Heart left ventricle (tissue), 16 donors: ENCODE measurements at regions of chr1 and their contacts with region 1.

Region 1: GRCh38 chr1:229258031-229258756 is 12.7 kb upstream of the RAB4A start:
- DNase-seq: peak in 3 of 5 donors; percentile 43 to 59 (median 57)
- ATAC-seq: peak; percentile 78 to 89 (median 83)
- H3K4me3 ChIP-seq: no peak overlapping the region
- H3K27ac ChIP-seq: no peak overlapping the region
- H3K4me1 ChIP-seq: peaks cover 0 to 19% (median 5%) of the 10 kb centered on the region in 12 donors
- H3K27me3 ChIP-seq: no peaks in the 10 kb centered on the region
- CTCF ChIP-seq: peak; percentile 68 to 88 (median 83)
- POLR2A ChIP-seq: no peak

Region 2: GRCh38 chr1:228664399-228664914 is 593.7 kb before region 1 on chr1:
- intact Hi-C with region 1: loop called in 1 of 10 experiments (anchors 1 kb)
- DNase-seq: peak; percentile 57 to 72 (median 67)
- ATAC-seq: peak in 2 of 4 donors; percentile 34 to 57
- H3K4me3 ChIP-seq: no peak overlapping the region
- H3K27ac ChIP-seq: no peak overlapping the region
- H3K4me1 ChIP-seq: peaks cover 0 to 9% (median 2%) of the 10 kb centered on the region in 12 donors
- H3K27me3 ChIP-seq: peaks cover 0 to 8% (median 0%) of the 10 kb centered on the region in 9 donors
- CTCF ChIP-seq: peak; percentile 75 to 93 (median 83)
- POLR2A ChIP-seq: no peak

Region 3: DNA sequence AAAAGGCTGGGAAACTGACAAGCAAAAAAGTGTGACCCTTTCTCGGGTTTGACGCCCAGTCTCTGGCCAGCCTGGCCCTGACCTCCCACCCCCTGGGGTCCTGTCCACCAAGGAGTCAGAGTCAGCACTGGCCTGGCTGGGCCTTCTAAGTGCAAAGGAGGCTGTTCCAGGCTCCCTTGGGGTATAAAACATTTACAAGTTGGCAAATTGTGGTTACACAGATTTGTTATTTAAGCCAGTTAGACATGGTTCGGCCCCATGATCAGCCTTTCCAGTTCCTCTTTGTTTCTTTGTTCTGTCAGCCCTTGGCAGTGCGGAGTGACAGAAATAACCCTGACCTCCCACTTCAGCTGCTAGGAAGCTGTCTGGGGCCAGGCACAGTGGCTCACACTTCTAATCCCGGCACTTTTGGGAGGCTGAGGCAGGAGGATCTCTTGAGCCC is 148.9 kb before region 1 on chr1:
- intact Hi-C with region 1: no loop called
- DNase-seq: peak in 2 of 5 donors; percentile 27 to 39
- ATAC-seq: peak in 3 of 4 donors; percentile 76 to 84 (median 78)
- H3K4me3 ChIP-seq: no peak overlapping the region
- H3K27ac ChIP-seq: peak overlapping the region in 3 of 12 donors; percentile 28 to 73 (median 70)
- H3K4me1 ChIP-seq: peaks cover 0 to 19% (median 0%) of the 10 kb centered on the region in 12 donors
- H3K27me3 ChIP-seq: no peaks in the 10 kb centered on the region
- CTCF ChIP-seq: no peak
- POLR2A ChIP-seq: no peak

Region 4: GRCh38 chr1:229479660-229480399 is 221.6 kb after region 1 on chr1:
- intact Hi-C with region 1: loop called (anchors 1 to 5 kb)
- DNase-seq: no peak
- ATAC-seq: peak in 1 of 4 donors; percentile 51
- H3K4me3 ChIP-seq: no peak overlapping the region
- H3K27ac ChIP-seq: no peak overlapping the region
- H3K4me1 ChIP-seq: peaks cover 0 to 18% (median 0%) of the 10 kb centered on the region in 12 donors
- H3K27me3 ChIP-seq: no peaks in the 10 kb centered on the region
- CTCF ChIP-seq: no peak
- POLR2A ChIP-seq: no peak

Region 5: GRCh38 chr1:229485318-229485717 is 227.1 kb after region 1 on chr1:
- intact Hi-C with region 1: loop called (anchors 1 to 5 kb)
- DNase-seq: no peak
- ATAC-seq: no peak
- H3K4me3 ChIP-seq: no peak overlapping the region
- H3K27ac ChIP-seq: no peak overlapping the region
- H3K4me1 ChIP-seq: peaks cover 0 to 13% (median 0%) of the 10 kb centered on the region in 12 donors
- H3K27me3 ChIP-seq: no peaks in the 10 kb centered on the region
- CTCF ChIP-seq: no peak
- POLR2A ChIP-seq: no peak

Region 6: GRCh38 chr1:229514578-229515275 is 256.5 kb after region 1 on chr1:
- intact Hi-C with region 1: loop called in 9 of 10 experiments (anchors 1 to 10 kb)
- DNase-seq: peak in 4 of 5 donors; percentile 48 to 62 (median 56)
- ATAC-seq: peak; percentile 77 to 90 (median 88)
- H3K4me3 ChIP-seq: no peak overlapping the region
- H3K27ac ChIP-seq: no peak overlapping the region
- H3K4me1 ChIP-seq: no peaks in the 10 kb centered on the region
- H3K27me3 ChIP-seq: no peaks in the 10 kb centered on the region
- CTCF ChIP-seq: peak; percentile 71 to 91 (median 79)
- POLR2A ChIP-seq: no peak

Region 7: DNA sequence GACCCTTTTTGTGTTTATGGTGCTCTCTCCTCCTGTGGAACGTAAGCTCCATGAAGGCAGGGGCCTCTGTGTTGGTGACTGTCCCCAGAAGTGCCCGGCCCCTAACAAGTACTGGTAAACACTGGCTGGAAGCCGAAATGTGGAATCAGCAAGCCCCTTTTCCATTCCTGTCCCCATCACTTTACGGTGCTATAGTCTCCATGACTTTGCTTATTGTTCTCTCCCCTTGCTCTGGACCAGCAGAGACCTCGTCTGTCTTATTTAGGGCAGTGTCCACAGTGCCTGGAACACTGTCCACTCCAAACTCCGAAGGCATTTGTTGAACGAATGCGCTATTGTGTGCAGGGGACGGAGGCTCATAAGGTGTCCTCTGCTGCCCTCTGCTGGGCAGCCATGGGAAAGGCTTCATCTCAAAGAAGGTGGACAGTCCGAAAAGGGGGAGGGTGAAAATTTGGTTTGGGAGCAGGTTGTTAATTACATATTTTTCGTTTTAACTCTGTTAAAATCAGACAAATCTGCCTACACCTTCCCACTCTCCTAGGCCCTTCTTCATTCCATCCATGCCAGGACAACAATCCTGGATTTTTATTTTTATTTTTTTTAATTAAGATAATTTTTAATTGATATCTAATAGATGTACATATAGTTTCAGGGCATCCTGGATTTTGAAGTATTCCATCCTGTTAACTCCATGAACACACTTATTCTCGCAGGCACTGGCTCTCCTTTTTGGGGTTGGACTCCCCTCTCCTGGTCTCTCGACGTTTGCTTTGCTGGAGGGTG is 1052.4 kb after region 1 on chr1:
- intact Hi-C with region 1: loop called in 4 of 10 experiments (anchors 5 to 10 kb)
- DNase-seq: peak; percentile 67 to 82 (median 71)
- ATAC-seq: peak; percentile 75 to 88 (median 86)
- H3K4me3 ChIP-seq: no peak overlapping the region
- H3K27ac ChIP-seq: no peak overlapping the region
- H3K4me1 ChIP-seq: peaks cover 0 to 16% (median 1%) of the 10 kb centered on the region in 12 donors
- H3K27me3 ChIP-seq: peaks cover 0 to 9% (median 0%) of the 10 kb centered on the region in 9 donors
- CTCF ChIP-seq: peak; percentile 85 to 96 (median 92)
- POLR2A ChIP-seq: no peak